Activated CD4-positive, alpha-beta memory T cell treated with anti-CD3 and anti-CD28 coated beads for 36 hours (primary cell): ENCODE measurements at regions of chr14 and their contacts with region 1.

Region 1: DNA sequence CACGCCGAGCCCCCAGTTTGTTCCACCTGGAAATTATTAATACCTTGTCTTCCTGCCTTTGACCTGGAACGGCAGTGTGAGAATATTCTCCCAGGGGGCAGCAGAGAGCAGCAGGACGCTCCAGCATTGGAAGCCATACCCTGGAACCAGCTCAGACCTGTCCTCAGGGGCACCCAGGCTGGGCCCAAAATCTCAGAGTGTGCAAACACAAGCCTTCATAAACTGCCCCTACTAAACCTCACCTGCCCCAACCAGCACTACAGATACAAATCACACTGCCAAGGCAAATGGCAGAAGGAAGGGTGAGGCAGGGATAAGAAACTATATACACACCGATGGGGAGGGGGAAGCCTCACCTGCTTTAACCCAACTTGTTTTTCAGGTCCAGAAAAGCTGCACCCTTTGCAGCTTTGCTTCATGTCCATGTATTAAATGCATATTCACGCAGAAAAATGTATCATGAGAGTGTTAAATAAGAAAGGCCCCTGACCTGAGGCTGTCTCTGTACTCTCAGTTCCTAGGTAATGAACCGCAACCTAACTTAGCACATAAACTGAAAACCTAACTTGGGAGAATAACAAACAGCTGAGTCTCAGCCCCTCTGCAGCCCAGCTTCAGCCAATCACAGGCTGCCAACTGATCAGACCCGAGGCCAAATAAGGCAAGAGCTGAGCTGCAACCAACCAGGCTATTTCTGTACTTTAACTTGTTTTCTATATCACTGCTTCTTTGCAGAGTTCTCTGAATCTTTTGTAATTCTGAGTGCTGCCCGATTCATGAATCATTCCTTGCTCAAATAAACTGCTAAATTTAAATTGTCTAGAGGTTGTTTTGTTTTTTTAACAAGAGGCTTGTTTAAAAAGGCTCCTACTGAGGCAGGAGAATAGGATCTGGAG is 130.1 kb downstream of the SPTSSA start:
- DNase-seq: peak; percentile 77
- H3K4me3 Mint-ChIP-seq: no peak overlapping the region
- H3K27ac Mint-ChIP-seq: no peak overlapping the region
- H3K4me1 Mint-ChIP-seq: peaks cover 10% of the 10 kb centered on the region
- H3K27me3 Mint-ChIP-seq: no peaks in the 10 kb centered on the region

Region 2: DNA sequence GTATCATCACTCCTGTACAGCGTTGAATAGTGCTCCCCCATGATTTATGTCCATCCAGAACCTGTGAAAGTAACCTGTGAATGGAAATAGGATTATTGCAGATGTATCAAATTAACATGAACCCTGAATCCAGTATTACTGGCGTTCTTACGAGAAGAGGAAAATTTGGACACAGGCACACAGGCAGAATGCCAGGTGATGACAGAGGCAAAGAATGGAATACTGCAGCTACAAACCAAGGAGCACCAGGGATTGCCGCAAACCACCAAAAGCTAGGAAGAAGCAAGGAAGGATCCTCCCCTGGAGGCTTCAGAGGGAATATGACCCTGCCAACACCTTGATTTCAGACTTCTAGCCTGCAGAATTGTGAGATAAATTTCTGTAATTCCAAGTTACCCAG is 267.6 kb before region 1 on chr14:
- CTCF ChIA-PET with region 1: no interaction called
- POLR2A ChIA-PET with region 1: no interaction called
- intact Hi-C with region 1: no loop called
- DNase-seq: no peak
- H3K4me3 Mint-ChIP-seq: no peak overlapping the region
- H3K27ac Mint-ChIP-seq: no peak overlapping the region
- H3K4me1 Mint-ChIP-seq: peaks cover 6% of the 10 kb centered on the region
- H3K27me3 Mint-ChIP-seq: peaks cover 5% of the 10 kb centered on the region

Region 3: DNA sequence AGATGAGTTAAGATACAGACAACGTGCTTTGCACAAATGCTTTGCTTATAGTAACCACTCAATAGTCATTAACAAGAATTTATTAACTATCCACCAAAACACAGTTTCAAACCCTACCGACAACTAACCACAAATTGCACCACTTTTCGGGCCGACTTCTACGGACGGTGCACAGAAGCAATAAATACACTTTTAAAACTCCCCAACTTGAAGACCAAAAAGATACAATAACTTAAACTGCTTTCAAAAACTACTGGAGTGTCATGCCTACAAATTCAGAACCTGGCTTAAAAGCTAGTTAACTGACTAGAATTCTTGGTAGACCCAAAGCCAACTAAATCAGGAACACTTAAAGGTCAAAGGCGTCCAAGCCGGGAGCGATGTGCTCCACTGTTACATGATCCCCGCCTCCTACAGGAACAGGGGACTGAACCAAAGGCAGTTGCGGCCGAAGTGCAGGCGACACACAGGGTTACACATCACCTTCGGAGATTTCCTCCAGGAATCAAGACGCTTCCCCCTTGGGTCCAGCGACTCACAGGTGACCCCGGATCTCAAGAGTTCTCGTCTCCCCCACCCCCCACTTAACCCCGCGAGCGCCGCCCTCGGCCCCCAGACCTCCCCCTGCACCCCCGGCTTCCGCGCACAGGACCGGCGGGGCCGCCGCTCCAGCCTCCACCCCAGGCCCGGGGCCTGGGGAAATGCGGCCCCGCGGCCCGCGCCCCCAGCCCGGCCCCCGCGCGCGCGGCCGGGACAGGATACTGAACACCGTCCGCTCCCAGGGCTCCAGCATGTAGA is 129.6 kb after region 1 on chr14:
- CTCF ChIA-PET with region 1: no interaction called
- POLR2A ChIA-PET with region 1: no interaction called
- intact Hi-C with region 1: loop called (anchors 10 kb)
- DNase-seq: peak; percentile 46
- H3K4me3 Mint-ChIP-seq: peak overlapping the region; percentile 91
- H3K27ac Mint-ChIP-seq: peak overlapping the region; percentile 76
- H3K4me1 Mint-ChIP-seq: peaks cover 14% of the 10 kb centered on the region
- H3K27me3 Mint-ChIP-seq: no peaks in the 10 kb centered on the region

Region 4: GRCh38 chr14:34496679-34497513 is 164.9 kb after region 1 on chr14:
- CTCF ChIA-PET with region 1: interaction called, 14 read pairs
- POLR2A ChIA-PET with region 1: no interaction called
- intact Hi-C with region 1: loop called (anchors 1 kb)
- DNase-seq: no peak
- H3K4me3 Mint-ChIP-seq: no peak overlapping the region
- H3K27ac Mint-ChIP-seq: no peak overlapping the region
- H3K4me1 Mint-ChIP-seq: no peaks in the 10 kb centered on the region
- H3K27me3 Mint-ChIP-seq: no peaks in the 10 kb centered on the region

Region 5: DNA sequence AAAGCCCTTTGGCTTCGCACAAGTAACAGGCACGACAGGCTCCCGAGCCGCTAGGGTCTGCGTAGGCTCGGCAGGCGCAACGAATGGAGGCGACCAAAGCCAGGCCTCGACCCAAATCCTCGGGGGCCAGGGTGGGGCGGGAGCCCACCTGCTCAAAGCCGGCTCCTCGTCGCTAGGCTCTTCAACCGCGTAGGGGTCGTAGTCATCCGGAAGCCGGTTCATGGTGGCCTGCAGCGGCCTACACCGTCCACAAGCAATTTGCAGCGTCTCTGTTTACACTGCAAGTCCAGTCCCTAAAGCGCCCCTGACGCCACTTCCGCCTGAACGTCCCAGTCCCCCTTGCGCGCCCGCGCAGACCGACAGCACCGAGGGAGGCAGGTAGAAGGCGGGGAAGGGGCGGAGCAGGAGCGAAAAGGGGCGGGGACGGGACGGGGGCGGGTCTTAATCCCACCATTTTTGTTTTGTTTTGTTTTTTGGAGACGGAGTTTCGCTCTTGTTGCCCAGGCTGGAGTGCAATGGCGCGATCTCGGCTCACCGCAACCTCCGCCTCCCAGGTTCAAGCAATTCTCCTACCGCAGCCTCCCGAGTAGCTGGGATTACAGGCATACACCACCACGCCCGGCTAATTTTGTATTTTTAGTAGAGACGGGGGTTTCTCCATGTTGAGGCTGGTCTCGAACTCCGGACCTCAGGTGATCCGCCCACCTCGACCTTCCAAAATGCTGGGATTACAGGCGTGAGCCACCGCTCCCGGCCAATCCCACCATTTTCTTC is 207.6 kb after region 1 on chr14 and contains the start of gene EAPP:
- CTCF ChIA-PET with region 1: interaction called, 3 read pairs
- POLR2A ChIA-PET with region 1: no interaction called
- intact Hi-C with region 1: loop called (anchors 10 kb)
- DNase-seq: peak; percentile 98
- H3K4me3 Mint-ChIP-seq: peak within 1 kb of the TSS; percentile 99
- H3K27ac Mint-ChIP-seq: peak within 1 kb of the TSS; percentile 98
- H3K4me1 Mint-ChIP-seq: peaks cover 31% of the 10 kb centered on the region
- H3K27me3 Mint-ChIP-seq: no peaks in the 10 kb centered on the region
- total RNA-seq, gene EAPP: 37.5 to 40.2 TPM

Region 6: DNA sequence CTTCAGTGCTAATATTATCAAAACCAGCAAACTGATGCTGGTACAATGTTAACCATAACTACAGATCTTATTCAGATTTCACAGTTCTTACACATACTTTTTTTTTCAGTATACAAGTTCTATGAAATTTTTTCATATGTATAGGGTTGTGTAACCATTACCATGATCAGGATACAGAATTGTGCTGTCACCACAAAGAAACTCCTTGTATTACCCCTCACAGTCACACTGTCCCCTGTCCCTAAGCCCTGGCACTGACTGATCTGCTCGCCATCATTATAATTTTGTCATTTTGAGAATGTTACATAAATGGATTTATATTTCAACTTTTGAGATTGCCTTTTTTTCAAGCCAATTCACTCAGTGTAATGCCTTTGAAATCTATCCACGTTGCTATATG is 1093.9 kb after region 1 on chr14:
- CTCF ChIA-PET with region 1: interaction called, 3 read pairs
- POLR2A ChIA-PET with region 1: no interaction called
- intact Hi-C with region 1: loop called (anchors 2 kb)
- DNase-seq: no peak
- H3K4me3 Mint-ChIP-seq: no peak overlapping the region
- H3K27ac Mint-ChIP-seq: no peak overlapping the region
- H3K4me1 Mint-ChIP-seq: peaks cover 24% of the 10 kb centered on the region
- H3K27me3 Mint-ChIP-seq: no peaks in the 10 kb centered on the region